Left lung (tissue), 14 donors: ENCODE measurements at regions of chr9 and their contacts with region 1.

Region 1: DNA sequence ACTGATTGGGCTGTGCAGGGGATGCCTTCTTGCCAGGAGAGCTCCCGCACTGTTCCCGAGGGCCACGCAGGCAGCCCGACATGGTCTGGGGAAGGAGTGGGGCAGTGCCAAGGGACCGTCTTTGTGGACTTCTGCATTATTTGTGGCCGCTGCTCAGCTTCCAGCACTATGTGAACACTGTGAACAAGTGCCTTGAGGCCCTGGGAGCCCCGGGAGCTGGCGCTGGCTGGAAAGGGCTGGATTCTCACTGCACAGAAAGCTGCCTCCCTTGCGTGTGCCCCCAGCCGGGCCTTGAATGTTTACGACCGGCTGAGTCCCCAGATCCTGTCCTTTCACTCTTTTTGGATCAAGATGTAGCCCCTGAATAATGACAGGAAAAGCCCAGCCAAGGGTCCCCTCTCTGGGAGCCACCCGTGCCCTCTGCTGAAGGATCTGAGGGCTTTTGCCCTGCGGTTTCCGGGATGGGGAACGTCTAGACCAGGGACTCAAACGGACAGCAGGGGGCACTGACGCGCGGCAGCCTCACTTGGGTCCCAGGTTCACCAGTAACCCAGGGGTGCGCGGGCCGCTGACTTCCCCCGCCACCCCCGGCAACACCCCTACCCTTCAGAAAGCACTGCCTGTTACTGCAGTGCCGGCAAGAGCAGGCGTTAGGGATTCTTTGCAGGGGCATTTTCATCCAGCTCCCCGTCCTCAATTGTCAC is 98.9 kb upstream of the FCN2 start:
- DNase-seq: no peak
- ATAC-seq: no peak
- H3K4me3 ChIP-seq: no peak overlapping the region
- H3K27ac ChIP-seq: no peak overlapping the region
- H3K4me1 ChIP-seq: peaks cover 0 to 6% of the 10 kb centered on the region in 2 donors
- H3K27me3 ChIP-seq: peaks cover 0 to 62% of the 10 kb centered on the region in 2 donors
- CTCF ChIP-seq: peak in 1 of 2 donors; percentile 11

Region 2: DNA sequence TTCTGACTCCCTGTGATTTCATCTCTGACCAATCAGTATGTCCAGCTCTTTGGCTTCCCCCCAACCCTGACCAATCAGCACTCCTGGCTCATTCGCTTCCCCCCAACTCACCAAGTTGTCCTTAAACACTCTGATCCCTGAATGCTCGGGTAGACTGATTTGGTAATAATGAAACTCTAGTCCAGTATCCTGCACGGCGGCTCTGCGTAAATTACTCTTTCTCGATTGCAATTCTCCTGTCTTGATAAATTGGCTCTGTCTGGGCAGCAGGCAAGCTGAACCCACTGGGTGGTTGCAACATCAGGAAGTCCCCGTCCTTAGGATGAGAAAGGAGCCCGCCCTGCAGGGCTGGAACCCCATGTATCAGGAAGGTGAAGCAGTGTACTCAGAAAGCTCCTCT is 109.3 kb after region 1 on chr9:
- intact Hi-C with region 1: no loop called
- DNase-seq: no peak
- ATAC-seq: no peak
- H3K4me3 ChIP-seq: no peak overlapping the region
- H3K27ac ChIP-seq: no peak overlapping the region
- H3K4me1 ChIP-seq: peaks cover 6 to 7% of the 10 kb centered on the region in 2 donors
- H3K27me3 ChIP-seq: peaks cover 0 to 18% of the 10 kb centered on the region in 2 donors
- CTCF ChIP-seq: no peak

Region 3: DNA sequence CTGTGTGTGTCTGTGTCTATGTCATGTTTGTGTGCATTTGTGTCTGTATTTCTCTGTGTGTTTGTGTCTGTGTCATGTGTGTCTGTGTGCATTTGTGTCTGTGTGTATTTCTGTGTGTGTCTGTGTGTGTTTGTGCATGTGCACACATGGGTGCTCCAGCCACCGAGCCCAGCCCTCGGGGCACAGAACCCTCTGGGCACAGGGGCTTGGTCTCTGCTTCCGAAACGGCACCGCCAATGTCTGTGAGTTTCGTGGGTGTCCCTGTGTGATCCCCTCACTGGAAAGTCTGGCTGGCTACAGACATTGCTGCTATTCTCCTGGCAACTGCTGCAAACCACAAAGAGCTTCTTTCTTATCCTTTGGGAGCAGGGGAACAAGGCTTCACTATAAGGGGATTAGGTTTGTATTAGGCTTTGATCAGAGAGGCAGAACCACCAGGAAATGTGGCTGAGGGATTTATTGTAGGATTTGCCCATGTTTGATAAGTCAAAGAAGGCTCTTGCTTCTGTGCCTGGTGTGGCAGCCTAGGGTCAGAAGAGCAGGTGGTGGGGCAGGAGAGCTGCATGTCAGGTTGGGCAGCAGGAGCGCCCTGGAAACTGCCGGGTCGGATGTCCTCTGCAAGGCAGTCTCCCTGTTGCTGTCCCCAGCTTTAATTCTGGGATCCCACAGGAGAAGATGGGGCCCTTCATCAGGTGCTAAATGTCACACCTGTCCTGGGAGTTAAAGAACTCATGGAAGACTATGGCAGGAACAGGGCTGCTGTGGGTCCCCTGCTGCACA is 175.6 kb after region 1 on chr9:
- intact Hi-C with region 1: no loop called
- DNase-seq: peak in 1 of 4 donors; percentile 38
- ATAC-seq: no peak
- H3K4me3 ChIP-seq: no peak overlapping the region
- H3K27ac ChIP-seq: no peak overlapping the region
- H3K4me1 ChIP-seq: no peaks in the 10 kb centered on the region
- H3K27me3 ChIP-seq: peaks cover 0 to 12% of the 10 kb centered on the region in 2 donors
- CTCF ChIP-seq: no peak

Region 4: GRCh38 chr9:134983074-134983473 is 201.3 kb after region 1 on chr9:
- intact Hi-C with region 1: loop called in 1 of 2 experiments (anchors 10 kb)
- DNase-seq: peak in 2 of 4 donors; percentile 45 to 90
- ATAC-seq: peak; percentile 68
- H3K4me3 ChIP-seq: no peak overlapping the region
- H3K27ac ChIP-seq: no peak overlapping the region
- H3K4me1 ChIP-seq: peaks cover 0 to 7% of the 10 kb centered on the region in 2 donors
- H3K27me3 ChIP-seq: no peaks in the 10 kb centered on the region
- CTCF ChIP-seq: peak; percentile 27 to 71